Tibial artery (tissue), 4 donors: ENCODE measurements at regions of chr3 and their contacts with region 1.

Region 1: GRCh38 chr3:171072432-171072831 is 45.9 kb upstream of the SLC2A2 start:
- DNase-seq: no peak
- H3K4me3 ChIP-seq: no peak overlapping the region
- H3K27ac ChIP-seq: no peak overlapping the region
- H3K4me1 ChIP-seq: no peaks in the 10 kb centered on the region
- H3K27me3 ChIP-seq: no peaks in the 10 kb centered on the region
- CTCF ChIP-seq: no peak

Region 2: GRCh38 chr3:170751083-170751898 is 321.1 kb before region 1 on chr3:
- intact Hi-C with region 1: no loop called
- DNase-seq: peak; percentile 54 to 88
- H3K4me3 ChIP-seq: no peak overlapping the region
- H3K27ac ChIP-seq: peak overlapping the region; percentile 49 to 64
- H3K4me1 ChIP-seq: peaks cover 0 to 56% (median 37%) of the 10 kb centered on the region in 4 donors
- H3K27me3 ChIP-seq: no peaks in the 10 kb centered on the region
- CTCF ChIP-seq: no peak

Region 3: GRCh38 chr3:171101982-171102641 is 29.7 kb after region 1 on chr3:
- intact Hi-C with region 1: loop called (anchors 2 kb)
- DNase-seq: no peak
- H3K4me3 ChIP-seq: no peak overlapping the region
- H3K27ac ChIP-seq: no peak overlapping the region
- H3K4me1 ChIP-seq: no peaks in the 10 kb centered on the region
- H3K27me3 ChIP-seq: no peaks in the 10 kb centered on the region
- CTCF ChIP-seq: no peak

Region 4: DNA sequence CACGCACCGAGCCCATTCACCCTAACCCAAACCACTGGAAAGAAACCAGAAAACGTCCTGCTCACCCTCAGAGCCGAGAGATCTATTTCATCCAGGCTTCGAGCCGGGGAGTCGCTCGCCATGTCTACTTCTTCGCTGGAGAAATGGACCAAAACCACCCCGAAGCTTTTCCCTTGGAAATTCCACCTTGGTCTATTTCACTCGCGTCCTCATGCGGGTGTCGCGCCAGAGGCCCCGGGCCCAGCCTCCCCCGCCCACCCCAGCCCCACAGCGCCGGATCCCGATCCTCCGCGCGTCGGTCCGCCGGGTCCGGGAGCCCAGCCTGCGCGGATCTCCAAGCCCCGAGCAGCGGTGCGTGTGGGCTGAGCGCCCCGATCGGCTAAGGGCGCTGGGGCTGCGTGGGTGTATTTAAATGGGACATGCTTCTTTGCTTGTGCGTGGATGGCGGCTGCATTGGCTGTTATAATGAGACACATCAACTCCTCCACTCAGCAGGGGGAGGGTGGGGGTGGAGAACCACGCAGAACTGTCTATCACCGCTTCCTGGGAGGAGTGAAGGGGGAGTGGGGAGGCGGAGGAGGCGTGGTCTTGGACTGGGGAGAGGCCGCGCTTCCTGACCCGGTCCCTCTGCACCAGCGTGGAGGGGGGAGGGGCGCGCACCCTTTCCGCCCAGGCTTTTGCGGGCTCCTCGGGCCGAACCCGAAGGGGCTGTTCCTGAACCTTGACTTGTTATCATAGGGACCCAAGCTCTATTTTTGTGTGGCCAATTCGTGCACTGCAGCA is 387.7 kb after region 1 on chr3 and contains the start of gene TNIK:
- intact Hi-C with region 1: no loop called
- DNase-seq: peak; percentile 92 to 94
- H3K4me3 ChIP-seq: peak within 1 kb of the TSS; percentile 83 to 92
- H3K27ac ChIP-seq: peak within 1 kb of the TSS; percentile 77 to 81
- H3K4me1 ChIP-seq: peaks cover 0 to 25% (median 8%) of the 10 kb centered on the region in 4 donors
- H3K27me3 ChIP-seq: no peaks in the 10 kb centered on the region
- CTCF ChIP-seq: peak; percentile 41 to 48